IMR-90 (cell line): ENCODE measurements at regions of chr1 and their contacts with region 1.

Region 1: DNA sequence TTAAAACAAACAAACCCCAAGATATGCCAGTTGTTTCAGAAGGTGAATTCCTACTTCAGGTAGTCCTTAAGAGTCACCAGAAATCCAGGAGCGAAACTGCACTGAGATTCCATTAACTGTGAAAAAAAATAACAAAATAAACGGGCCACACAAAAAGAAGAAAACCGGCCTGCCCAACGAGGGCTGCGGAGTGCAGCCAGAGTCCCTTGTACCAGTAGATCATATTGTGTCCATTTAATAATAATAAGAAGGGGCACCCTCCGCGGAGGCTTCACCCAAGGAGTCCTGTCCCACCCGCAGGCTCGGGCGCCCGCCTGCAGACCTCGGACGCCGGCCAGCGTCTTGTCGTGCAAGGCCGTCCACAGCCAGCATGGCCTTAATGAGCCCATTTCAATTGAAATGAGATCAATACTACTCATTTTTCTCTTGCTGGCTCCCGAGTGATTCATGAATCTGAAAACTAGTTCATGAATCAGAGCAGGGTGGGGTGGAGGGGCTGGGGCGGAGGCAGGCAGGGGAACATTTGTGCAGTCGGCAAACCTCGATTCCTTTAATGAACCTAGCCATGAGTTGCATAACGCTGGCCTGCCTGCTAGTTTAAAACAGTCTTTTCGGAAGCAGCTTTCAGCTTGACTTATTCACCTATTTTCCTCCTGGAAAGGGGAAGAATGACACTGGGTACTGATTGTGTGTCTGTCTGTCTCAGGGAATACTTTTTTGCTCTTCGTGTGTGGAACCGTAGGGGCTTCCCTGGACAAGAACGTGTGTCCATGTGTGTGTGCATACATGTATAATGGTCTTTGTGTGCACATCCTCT is 113.1 kb upstream of the IRF2BP2 start:
- DNase-seq: peak; percentile 87
- ATAC-seq: peak; percentile 13
- H3K4me3 ChIP-seq: peak overlapping the region; percentile 13; the same call in 1 of the 2 replicates
- H3K27ac ChIP-seq: peak overlapping the region; percentile 92
- H3K4me1 ChIP-seq: peaks cover 55% of the 10 kb centered on the region
- H3K27me3 ChIP-seq: no peaks in the 10 kb centered on the region
- CTCF ChIP-seq: no peak
- POLR2A ChIP-seq: peak; percentile 35; the same call in 1 of the 2 replicates
- RAD21 ChIP-seq: no peak; the same call in 1 of the 2 replicates

Region 2: GRCh38 chr1:234499119-234499942 is 223.8 kb before region 1 on chr1:
- CTCF ChIA-PET with region 1: no interaction called
- POLR2A ChIA-PET with region 1: interaction called, 6 read pairs
- dilution Hi-C with region 1: no loop called
- in situ Hi-C with region 1: loop called (anchors 10 kb)
- intact Hi-C with region 1: loop called (anchors 1 kb)
- DNase-seq: peak; percentile 86
- ATAC-seq: peak; percentile 78
- H3K4me3 ChIP-seq: peak overlapping the region; percentile 10; the same call in 1 of the 2 replicates
- H3K27ac ChIP-seq: peak overlapping the region; percentile 89
- H3K4me1 ChIP-seq: peaks cover 25% of the 10 kb centered on the region
- H3K27me3 ChIP-seq: no peaks in the 10 kb centered on the region
- CTCF ChIP-seq: peak; percentile 96
- POLR2A ChIP-seq: peak; percentile 73
- RAD21 ChIP-seq: peak; percentile 99

Region 3: DNA sequence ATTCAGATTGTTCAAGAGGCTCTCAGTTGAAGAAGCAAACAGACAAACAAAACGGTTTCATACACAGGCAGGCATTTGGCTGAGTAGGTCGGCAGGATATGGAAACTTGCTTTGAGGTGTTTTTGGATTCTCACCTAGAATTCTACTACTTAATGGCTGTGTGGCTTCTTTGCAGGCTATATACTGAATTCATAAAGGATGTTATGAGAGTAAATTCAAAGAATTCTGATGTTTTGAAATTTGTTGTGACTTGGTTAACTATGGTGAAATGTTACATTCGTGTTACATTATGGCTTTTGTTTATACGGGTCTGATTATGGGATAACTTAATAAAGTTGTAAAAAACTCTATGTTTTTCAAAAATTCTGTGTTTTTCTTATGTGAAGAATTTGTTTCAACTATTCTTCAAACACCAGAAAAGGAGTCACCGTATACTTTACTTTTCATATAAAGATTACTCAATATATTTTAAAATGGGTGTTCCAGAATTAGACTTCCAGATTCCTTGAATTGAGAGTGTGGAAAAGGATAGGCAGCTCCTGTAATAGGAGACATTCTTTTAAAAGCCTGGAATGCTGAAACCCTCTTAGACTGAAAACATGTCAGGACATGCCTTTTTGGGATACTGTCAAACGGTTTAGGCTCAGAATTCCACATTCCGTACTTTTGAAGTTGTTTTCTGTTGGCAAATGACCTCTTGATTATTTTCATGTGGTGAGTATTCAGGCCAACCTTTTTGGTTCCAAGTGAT is 105.0 kb before region 1 on chr1:
- CTCF ChIA-PET with region 1: interaction called, 7 read pairs
- POLR2A ChIA-PET with region 1: interaction called, 18 read pairs
- dilution Hi-C with region 1: no loop called
- in situ Hi-C with region 1: loop called (anchors 5 kb)
- intact Hi-C with region 1: loop called (anchors 1 kb)
- DNase-seq: peak; percentile 85
- ATAC-seq: peak; percentile 56
- H3K4me3 ChIP-seq: no peak overlapping the region
- H3K27ac ChIP-seq: peak overlapping the region; percentile 99
- H3K4me1 ChIP-seq: peaks cover 30% of the 10 kb centered on the region
- H3K27me3 ChIP-seq: no peaks in the 10 kb centered on the region
- CTCF ChIP-seq: no peak
- POLR2A ChIP-seq: no peak
- RAD21 ChIP-seq: no peak

Region 4: GRCh38 chr1:234755449-234755863 is 32.3 kb after region 1 on chr1:
- CTCF ChIA-PET with region 1: no interaction called
- POLR2A ChIA-PET with region 1: no interaction called
- dilution Hi-C with region 1: no loop called
- in situ Hi-C with region 1: no loop called
- intact Hi-C with region 1: no loop called
- DNase-seq: peak; percentile 95
- ATAC-seq: peak; percentile 92
- H3K4me3 ChIP-seq: no peak overlapping the region
- H3K27ac ChIP-seq: peak overlapping the region; percentile 36
- H3K4me1 ChIP-seq: peaks cover 10% of the 10 kb centered on the region
- H3K27me3 ChIP-seq: no peaks in the 10 kb centered on the region
- CTCF ChIP-seq: no peak
- POLR2A ChIP-seq: no peak
- RAD21 ChIP-seq: no peak; the same call in none of the 2 replicates

Region 5: GRCh38 chr1:234925440-234926263 is 202.5 kb after region 1 on chr1:
- CTCF ChIA-PET with region 1: no interaction called
- POLR2A ChIA-PET with region 1: interaction called, 6 read pairs
- dilution Hi-C with region 1: no loop called
- in situ Hi-C with region 1: no loop called
- intact Hi-C with region 1: loop called (anchors 1 kb)
- DNase-seq: peak; percentile 99
- ATAC-seq: peak; percentile 96
- H3K4me3 ChIP-seq: no peak overlapping the region
- H3K27ac ChIP-seq: peak overlapping the region; percentile 60
- H3K4me1 ChIP-seq: peaks cover 17% of the 10 kb centered on the region
- H3K27me3 ChIP-seq: no peaks in the 10 kb centered on the region
- CTCF ChIP-seq: no peak
- POLR2A ChIP-seq: no peak
- RAD21 ChIP-seq: peak; percentile 48

Region 6: DNA sequence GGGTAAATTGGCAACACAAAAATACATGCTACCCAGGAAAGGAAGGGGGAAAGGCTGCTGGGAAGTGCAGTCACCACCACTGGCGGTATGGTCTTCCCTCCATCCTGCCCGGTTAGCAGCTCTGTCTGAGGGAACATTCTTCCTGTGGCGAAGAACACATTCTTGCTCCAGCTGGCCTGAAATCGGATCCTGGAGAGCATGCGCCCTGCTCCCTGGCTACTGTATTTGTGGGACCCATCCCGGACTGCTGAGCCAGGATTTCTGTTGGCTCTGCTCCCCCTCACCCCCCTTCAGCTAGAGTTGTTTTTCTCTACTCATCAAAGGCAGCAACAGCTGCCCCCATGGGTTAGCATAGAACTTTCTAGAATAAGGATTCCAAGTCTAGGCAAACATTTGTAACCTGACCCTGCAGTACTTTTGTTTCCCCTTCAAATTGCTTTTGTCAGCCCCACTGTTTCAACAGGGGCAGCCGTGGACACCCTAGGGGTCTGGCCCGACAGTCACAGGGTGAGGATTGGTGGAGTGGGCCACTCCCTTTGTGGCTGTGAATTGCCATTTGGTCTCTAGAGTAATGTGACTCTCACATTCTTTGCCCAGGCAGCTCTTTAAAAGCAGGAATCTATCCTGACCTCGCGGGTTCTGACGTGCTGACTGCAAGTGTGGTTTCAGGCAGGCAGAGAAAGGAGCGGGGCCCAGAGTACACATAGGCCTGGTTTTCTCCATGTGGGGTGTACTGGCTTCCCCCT is 247.8 kb after region 1 on chr1:
- CTCF ChIA-PET with region 1: interaction called, 3 read pairs
- POLR2A ChIA-PET with region 1: interaction called, 4 read pairs
- dilution Hi-C with region 1: no loop called
- in situ Hi-C with region 1: loop called (anchors 10 kb)
- intact Hi-C with region 1: loop called (anchors 1 kb)
- DNase-seq: peak; percentile 98
- ATAC-seq: peak; percentile 78
- H3K4me3 ChIP-seq: no peak overlapping the region
- H3K27ac ChIP-seq: peak overlapping the region; percentile 95
- H3K4me1 ChIP-seq: peaks cover 38% of the 10 kb centered on the region
- H3K27me3 ChIP-seq: no peaks in the 10 kb centered on the region
- CTCF ChIP-seq: 0 out of 2 replicates have a peak, but pooled peaks have one; percentile 11
- POLR2A ChIP-seq: peak; percentile 55
- RAD21 ChIP-seq: peak; percentile 28; the same call in 1 of the 2 replicates

Region 7: DNA sequence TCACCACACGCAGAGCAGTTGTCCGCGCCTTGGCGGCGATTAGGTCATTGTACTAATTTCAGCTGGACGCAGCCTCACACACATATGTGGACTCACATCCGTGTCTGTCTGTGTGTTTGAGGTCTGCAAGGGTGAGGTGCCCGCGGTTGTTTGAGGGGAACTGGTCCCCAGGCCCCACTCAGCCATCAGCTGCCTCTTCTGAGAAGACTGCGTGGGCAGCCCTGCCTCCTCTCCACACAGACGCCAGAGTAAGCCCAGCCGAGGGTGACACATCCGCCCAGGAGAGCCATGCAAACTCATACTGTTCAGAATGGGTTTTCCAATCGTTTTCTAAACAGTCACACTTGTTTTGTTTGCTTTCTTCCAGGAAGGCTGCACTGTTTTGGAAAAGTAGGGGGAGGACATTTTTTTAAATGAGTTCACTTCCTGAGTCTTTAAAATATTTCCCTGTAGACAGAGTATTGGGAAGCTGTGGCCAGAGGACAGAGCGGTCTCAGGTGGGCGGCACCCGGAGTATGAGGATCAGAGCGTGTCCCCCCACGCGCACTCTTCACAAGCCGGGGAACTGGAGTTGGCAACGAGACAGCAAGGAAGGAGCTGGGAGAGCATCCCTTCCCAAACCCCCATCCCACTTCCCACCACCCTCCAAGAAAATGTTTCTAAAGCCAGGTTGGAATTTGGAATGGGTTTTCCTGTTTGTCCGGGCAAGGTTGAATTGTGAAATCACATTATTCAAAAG is 352.2 kb after region 1 on chr1:
- CTCF ChIA-PET with region 1: no interaction called
- POLR2A ChIA-PET with region 1: no interaction called
- dilution Hi-C with region 1: no loop called
- in situ Hi-C with region 1: loop called (anchors 5 kb)
- intact Hi-C with region 1: no loop called
- DNase-seq: peak; percentile 97
- ATAC-seq: peak; percentile 85
- H3K4me3 ChIP-seq: no peak overlapping the region
- H3K27ac ChIP-seq: peak overlapping the region; percentile 95
- H3K4me1 ChIP-seq: peaks cover 44% of the 10 kb centered on the region
- H3K27me3 ChIP-seq: no peaks in the 10 kb centered on the region
- CTCF ChIP-seq: no peak
- POLR2A ChIP-seq: peak; percentile 54; the same call in 1 of the 2 replicates
- RAD21 ChIP-seq: no peak